Lower leg skin (tissue), 4 donors: ENCODE measurements at regions of chr1 and their contacts with region 1.

Region 1: DNA sequence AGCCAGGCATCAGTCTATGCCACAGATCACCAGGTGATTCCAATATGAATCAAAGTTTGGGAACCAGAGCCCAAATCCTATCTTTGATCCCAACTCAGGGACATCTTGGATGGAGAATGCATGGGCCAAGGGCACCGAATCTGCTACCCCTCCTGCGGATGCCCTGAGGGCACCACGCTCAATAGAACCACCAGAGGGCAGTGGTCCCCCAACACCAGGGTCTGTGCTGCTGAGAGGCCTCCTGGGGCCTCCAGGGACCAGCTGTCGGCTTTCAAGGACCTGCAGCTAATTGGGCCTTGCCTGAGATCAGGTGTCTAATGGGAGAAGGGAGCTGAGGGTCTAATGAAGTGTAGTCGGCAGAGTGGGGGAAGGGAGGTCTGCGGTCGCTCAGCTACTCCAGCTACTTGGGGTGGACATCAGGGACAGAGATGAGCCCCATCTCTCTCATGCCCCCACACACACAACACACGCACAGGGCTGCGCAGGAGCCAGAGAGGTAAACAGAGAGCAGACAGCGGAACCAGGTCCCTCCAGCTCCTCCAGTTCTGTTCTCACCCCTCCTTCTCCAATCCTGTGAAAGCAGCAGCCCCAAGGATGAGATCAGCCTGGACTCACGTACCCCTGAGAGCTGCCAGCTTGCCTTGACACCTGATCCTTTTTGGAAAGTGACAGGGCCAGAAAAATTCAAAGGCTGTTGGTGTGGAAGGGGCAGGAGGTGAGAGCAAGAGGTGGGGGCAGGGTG is 34.9 kb upstream of the PPP1R15B start:
- DNase-seq: no peak
- H3K4me3 ChIP-seq: no peak overlapping the region
- CTCF ChIP-seq: no peak
- POLR2A ChIP-seq: no peak

Region 2: DNA sequence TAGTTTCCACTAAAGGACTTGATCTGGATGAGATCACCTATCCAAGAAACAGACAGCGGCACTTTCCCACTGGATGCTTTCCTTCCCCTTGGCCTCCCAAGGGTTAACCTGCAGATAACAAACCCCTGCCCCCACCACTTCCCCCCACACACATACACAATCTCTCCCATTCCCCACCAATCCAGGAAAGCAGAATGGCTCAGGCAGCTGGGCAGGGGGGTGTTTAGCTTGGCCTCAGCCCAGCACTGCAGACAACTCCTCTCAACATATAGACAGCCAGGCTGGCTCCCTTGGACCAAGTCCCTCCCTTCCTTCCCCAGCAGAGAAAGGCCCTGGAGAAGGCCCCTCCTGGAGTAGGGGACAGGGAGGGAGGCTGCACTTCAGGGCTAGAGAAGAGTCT is 111.5 kb before region 1 on chr1:
- intact Hi-C with region 1: no loop called
- DNase-seq: no peak
- H3K4me3 ChIP-seq: no peak overlapping the region
- CTCF ChIP-seq: no peak
- POLR2A ChIP-seq: no peak

Region 3: DNA sequence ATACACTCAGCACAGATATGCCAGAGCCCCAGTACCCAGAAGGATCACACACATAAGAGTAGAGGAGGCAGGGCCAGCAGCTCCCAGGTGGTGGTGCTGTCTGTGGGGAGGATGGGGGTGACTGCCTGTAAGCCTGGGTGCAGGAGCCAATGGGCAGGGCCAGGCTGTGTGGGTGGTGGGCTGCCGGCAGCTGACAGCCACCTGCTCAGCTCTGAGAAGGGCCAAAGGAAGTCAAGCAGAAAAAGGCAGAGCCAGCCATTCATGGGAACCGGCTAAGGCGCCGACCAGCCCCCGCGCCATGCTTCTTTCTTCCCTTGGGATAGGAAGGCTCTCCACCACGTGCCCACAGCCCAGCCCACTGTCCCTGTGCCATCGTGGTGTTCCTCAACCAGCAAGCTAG is 34.0 kb after region 1 on chr1:
- intact Hi-C with region 1: loop called (anchors 5 kb)
- DNase-seq: no peak
- H3K4me3 ChIP-seq: no peak overlapping the region
- CTCF ChIP-seq: no peak
- POLR2A ChIP-seq: no peak

Region 4: DNA sequence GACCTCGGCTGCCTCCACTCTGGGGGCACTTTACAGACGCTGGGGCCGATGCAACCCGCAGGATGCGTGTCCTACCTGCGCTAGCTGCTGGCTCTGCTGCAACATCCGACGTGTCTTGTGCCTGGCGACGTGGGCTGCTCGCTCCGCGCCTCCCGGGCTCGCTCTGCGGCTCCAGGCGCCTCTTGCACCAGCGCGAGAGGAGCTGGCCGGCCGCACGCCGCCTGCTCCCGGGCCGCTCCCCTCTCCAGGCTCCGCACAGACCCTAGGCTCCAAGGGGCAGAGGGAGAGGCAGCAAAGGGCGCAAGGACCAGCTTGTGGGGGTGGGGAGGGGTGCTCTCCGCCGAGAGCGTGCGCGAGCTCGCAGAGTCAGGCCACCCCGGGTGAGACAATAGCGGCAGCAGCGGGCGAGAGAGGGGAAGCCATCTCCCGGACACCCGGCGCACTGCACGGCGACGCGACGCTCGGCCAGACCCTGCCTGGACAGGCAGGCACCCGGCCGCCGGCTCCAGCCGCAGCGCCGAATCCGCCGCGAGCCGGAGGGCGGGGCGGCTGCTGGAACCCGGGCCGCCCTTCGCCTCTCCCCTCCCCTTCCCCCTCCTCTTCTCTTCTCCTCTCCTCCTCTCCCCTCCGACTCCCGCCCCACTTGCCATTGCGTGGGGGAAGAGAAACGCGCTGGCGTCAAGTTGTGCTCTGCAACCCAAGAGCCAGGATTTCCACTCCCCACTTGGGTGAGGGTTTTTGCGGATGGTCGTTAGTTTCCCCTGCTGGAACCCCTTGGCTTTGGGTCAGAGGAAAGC is 47.9 kb after region 1 on chr1 and contains the start of gene PIK3C2B:
- intact Hi-C with region 1: no loop called
- DNase-seq: peak; percentile 62 to 95
- H3K4me3 ChIP-seq: peak within 1 kb of the TSS; percentile 75
- CTCF ChIP-seq: peak in 1 of 3 donors; percentile 33
- POLR2A ChIP-seq: no peak
- total RNA-seq, gene PIK3C2B: 51.7 to 92.1 (median 62.1) TPM